ENCODE measurements at regions of chr1 and their contacts with region 1.

Region 1: DNA sequence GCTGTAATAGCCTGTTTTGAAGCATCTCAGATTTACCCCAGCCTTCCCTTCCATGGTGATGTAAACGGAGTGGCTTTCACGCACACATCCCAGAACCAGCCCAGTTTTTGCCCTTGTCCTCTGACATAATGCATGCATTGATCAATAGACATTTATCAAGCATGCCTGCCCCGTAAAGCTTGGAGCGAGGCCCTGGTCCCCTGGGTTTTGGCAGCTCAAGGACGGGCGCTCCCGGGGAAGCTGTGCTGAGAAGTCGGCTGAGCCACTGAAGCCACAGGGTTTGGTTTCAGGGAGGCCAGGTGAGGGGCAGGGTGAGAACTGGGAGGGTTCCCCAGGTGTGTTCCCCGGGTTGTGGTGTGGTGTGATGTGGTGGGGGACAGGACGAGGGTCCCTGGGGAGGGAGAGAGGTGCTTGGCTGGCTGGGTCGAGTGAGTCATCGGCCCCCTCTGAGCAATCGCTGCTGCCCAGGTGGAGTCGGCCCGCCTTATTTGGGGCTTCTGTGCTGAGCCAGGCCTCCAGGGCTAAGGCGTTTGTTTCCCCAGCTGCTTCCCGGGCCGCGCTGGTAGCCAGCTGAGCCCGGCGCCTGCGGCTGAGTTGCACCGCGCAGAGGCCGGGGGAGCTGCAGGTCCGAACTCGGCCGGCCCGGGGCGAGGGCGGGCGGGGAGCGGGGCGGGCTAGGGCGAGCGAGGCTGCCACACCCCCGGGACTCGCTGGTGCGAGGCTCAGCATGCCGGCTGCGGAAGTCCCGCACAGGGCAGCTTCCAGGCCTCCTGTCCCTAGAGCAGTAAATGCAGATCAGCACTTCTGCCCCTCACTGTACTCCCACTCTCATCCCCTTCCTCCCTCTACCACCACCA is 23.6 kb downstream of the ATP2B4 start:
- DNase-seq: peak; percentile 81
- ATAC-seq: peak; percentile 43
- H3K4me3 Mint-ChIP-seq: peak overlapping the region; percentile 59
- H3K27ac Mint-ChIP-seq: peak overlapping the region; percentile 89
- H3K4me1 Mint-ChIP-seq: peaks cover 74% of the 10 kb centered on the region
- H3K27me3 Mint-ChIP-seq: no peaks in the 10 kb centered on the region

Region 2: GRCh38 chr1:203609979-203610493 is 40.2 kb before region 1 on chr1:
- CTCF ChIA-PET with region 1: interaction called, 3 read pairs
- POLR2A ChIA-PET with region 1: interaction called, 6 read pairs
- intact Hi-C with region 1: loop called (anchors 1 to 2 kb)
- DNase-seq: no peak
- ATAC-seq: no peak
- H3K4me3 Mint-ChIP-seq: no peak overlapping the region
- H3K27ac Mint-ChIP-seq: peak overlapping the region; percentile 7
- H3K4me1 Mint-ChIP-seq: peaks cover 46% of the 10 kb centered on the region
- H3K27me3 Mint-ChIP-seq: no peaks in the 10 kb centered on the region

Region 3: DNA sequence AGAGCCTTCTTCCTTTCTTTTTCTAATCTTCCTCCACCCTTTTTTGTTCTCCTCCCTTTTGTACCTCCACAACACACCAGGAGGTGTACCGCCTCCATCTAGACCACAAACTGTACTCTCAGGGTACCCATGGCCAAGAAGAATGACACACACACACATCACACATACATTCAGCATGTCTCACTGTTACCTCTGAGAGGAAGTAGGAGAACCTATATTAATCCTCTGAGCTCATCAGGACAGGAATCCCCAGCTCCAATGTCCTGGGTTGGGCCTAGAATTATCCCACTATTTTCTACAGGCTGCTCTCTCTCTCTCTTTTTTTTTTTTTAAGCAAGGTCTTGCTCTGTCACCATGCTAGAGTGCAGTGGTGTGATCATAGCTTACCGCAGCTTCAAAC is 13.1 kb after region 1 on chr1:
- CTCF ChIA-PET with region 1: interaction called, 18 read pairs
- POLR2A ChIA-PET with region 1: interaction called, 13 read pairs
- intact Hi-C with region 1: loop called in 1 of 2 experiments (anchors 1 kb)
- DNase-seq: peak; percentile 58
- ATAC-seq: peak; percentile 92
- H3K4me3 Mint-ChIP-seq: no peak overlapping the region
- H3K27ac Mint-ChIP-seq: peak overlapping the region; percentile 78
- H3K4me1 Mint-ChIP-seq: peaks cover 56% of the 10 kb centered on the region
- H3K27me3 Mint-ChIP-seq: no peaks in the 10 kb centered on the region

Region 4: GRCh38 chr1:203682473-203683383 is 32.5 kb after region 1 on chr1:
- CTCF ChIA-PET with region 1: interaction called, 6 read pairs
- POLR2A ChIA-PET with region 1: interaction called, 7 read pairs
- intact Hi-C with region 1: loop called in 1 of 2 experiments (anchors 1 kb)
- DNase-seq: peak; percentile 73
- ATAC-seq: peak; percentile 92
- H3K4me3 Mint-ChIP-seq: peak overlapping the region; percentile 32
- H3K27ac Mint-ChIP-seq: peak overlapping the region; percentile 80
- H3K4me1 Mint-ChIP-seq: peaks cover 37% of the 10 kb centered on the region
- H3K27me3 Mint-ChIP-seq: no peaks in the 10 kb centered on the region